Activated CD4-positive, alpha-beta memory T cell treated with anti-CD3 and anti-CD28 coated beads, Interleukin-2, amount 10 ng/mL, durations not matched to agents 7 days and 5 days (primary cell): ENCODE measurements at regions of chr1 and their contacts with region 1.

Region 1: GRCh38 chr1:100265931-100266740 is at the start of gene RTCA:
- DNase-seq: peak; percentile 96
- H3K4me3 Mint-ChIP-seq: peak within 1 kb of the TSS; percentile 98
- H3K27ac Mint-ChIP-seq: peak within 1 kb of the TSS; percentile 93
- H3K4me1 Mint-ChIP-seq: peaks cover 45% of the 10 kb centered on the region
- H3K27me3 Mint-ChIP-seq: peaks cover 3% of the 10 kb centered on the region
- total RNA-seq, gene RTCA: 67.5 to 68.2 TPM

Region 2: GRCh38 chr1:100132566-100133477 is 133.3 kb before region 1 on chr1 and contains the starts of genes SASS6 and TRMT13:
- CTCF ChIA-PET with region 1: interaction called, 3 read pairs
- POLR2A ChIA-PET with region 1: interaction called, 34 read pairs
- DNase-seq: peak; percentile 97
- H3K4me3 Mint-ChIP-seq: peak within 1 kb of the TSS; percentile 96
- H3K27ac Mint-ChIP-seq: peak within 1 kb of the TSS; percentile 90
- H3K4me1 Mint-ChIP-seq: peaks cover 50% of the 10 kb centered on the region
- H3K27me3 Mint-ChIP-seq: no peaks in the 10 kb centered on the region
- total RNA-seq, gene SASS6: 13.2 to 13.3 TPM
- total RNA-seq, gene TRMT13: 13.9 to 15.4 TPM

Region 3: DNA sequence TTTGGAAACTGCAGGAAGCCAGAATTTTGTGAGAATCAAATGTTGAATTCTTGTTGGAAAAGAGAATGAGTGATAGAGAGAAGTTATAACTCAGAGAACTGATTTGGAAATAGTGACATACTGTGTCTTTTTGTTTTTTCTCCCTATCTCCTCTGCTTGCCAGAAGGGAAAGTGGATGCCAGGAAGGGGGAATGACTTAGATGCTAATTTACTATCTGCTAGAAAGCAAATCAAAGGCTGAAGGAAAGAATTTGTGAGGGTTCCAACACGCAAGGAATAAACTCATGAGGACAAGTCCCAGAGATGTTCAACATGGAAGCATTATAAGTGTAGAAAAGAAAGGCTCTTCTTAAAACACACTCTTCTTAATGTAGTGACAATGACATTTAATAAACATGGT is 67.5 kb before region 1 on chr1:
- CTCF ChIA-PET with region 1: no interaction called
- POLR2A ChIA-PET with region 1: no interaction called
- DNase-seq: no peak
- H3K4me3 Mint-ChIP-seq: no peak overlapping the region
- H3K27ac Mint-ChIP-seq: no peak overlapping the region
- H3K4me1 Mint-ChIP-seq: no peaks in the 10 kb centered on the region
- H3K27me3 Mint-ChIP-seq: no peaks in the 10 kb centered on the region

Region 4: GRCh38 chr1:100277866-100278265 is 11.7 kb after region 1 on chr1:
- CTCF ChIA-PET with region 1: interaction called, 4 read pairs
- POLR2A ChIA-PET with region 1: interaction called, 12 read pairs
- DNase-seq: peak; percentile 28
- H3K4me3 Mint-ChIP-seq: no peak overlapping the region
- H3K27ac Mint-ChIP-seq: no peak overlapping the region
- H3K4me1 Mint-ChIP-seq: peaks cover 40% of the 10 kb centered on the region
- H3K27me3 Mint-ChIP-seq: no peaks in the 10 kb centered on the region

Region 5: GRCh38 chr1:100387209-100387608 is 121.1 kb after region 1 on chr1:
- CTCF ChIA-PET with region 1: no interaction called
- POLR2A ChIA-PET with region 1: interaction called, 19 read pairs
- DNase-seq: no peak
- H3K4me3 Mint-ChIP-seq: peak overlapping the region; percentile 58
- H3K27ac Mint-ChIP-seq: peak overlapping the region; percentile 72
- H3K4me1 Mint-ChIP-seq: peaks cover 64% of the 10 kb centered on the region
- H3K27me3 Mint-ChIP-seq: no peaks in the 10 kb centered on the region

Region 6: GRCh38 chr1:100443811-100444571 is 177.9 kb after region 1 on chr1:
- CTCF ChIA-PET with region 1: interaction called, 3 read pairs
- POLR2A ChIA-PET with region 1: interaction called, 16 read pairs
- DNase-seq: peak; percentile 50
- H3K4me3 Mint-ChIP-seq: peak overlapping the region; percentile 80
- H3K27ac Mint-ChIP-seq: peak overlapping the region; percentile 98
- H3K4me1 Mint-ChIP-seq: peaks cover 89% of the 10 kb centered on the region
- H3K27me3 Mint-ChIP-seq: no peaks in the 10 kb centered on the region

Region 7: DNA sequence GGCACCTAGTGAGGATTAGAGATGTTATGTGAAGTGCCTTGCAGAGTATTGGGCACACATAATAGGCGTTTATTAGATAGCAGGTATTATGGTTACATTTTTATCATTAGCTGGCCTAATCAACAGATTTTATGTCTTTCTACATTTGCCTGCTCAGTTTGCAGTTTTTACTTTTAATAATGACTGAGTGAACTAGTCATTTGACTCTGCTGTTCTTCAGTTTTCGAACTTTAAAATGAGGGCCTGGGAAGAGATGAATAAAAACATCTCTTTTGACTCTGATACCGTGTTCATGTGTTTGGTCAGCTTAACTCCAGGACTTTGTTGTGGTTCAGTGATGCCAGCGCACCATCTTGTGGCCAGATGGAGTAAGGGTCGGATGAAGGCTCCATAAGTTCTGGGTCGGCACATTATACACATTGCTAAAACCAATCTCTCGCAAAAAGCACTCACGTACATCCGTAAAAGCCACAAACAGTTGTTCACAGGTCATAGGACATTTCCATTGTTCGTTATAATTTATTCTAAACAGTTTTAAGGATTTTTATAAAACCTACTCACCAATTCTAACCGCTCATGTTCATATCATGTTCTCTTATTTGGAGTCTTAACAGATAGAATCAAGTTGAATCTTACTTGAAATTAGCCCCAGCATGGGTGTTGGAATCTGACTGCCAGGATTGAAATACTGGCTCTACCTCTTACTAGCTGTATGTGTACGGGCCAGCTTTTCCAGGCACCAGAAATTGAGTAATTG is 193.4 kb after region 1 on chr1:
- CTCF ChIA-PET with region 1: interaction called, 21 read pairs
- POLR2A ChIA-PET with region 1: interaction called, 20 read pairs
- DNase-seq: peak; percentile 78
- H3K4me3 Mint-ChIP-seq: no peak overlapping the region
- H3K27ac Mint-ChIP-seq: peak overlapping the region; percentile 25
- H3K4me1 Mint-ChIP-seq: peaks cover 51% of the 10 kb centered on the region
- H3K27me3 Mint-ChIP-seq: no peaks in the 10 kb centered on the region